ENCODE measurements at regions of chr7 and their contacts with region 1.

Region 1: GRCh38 chr7:105531792-105532671 is at the start of gene RINT1:
- DNase-seq: peak; percentile 78 to 94 (median 86)
- ATAC-seq: peak; percentile 88
- H3K4me3 ChIP-seq: peak within 1 kb of the TSS; percentile 82
- H3K4me3 Mint-ChIP-seq: peak within 1 kb of the TSS; percentile 94
- H3K27ac ChIP-seq: peak within 1 kb of the TSS; percentile 85 to 89
- H3K27ac Mint-ChIP-seq: peak within 1 kb of the TSS; percentile 87
- H3K4me1 ChIP-seq: peaks cover 35% of the 10 kb centered on the region
- H3K4me1 Mint-ChIP-seq: peaks cover 44% of the 10 kb centered on the region
- H3K27me3 ChIP-seq: no peaks in the 10 kb centered on the region
- H3K27me3 Mint-ChIP-seq: no peaks in the 10 kb centered on the region
- CTCF ChIP-seq: peak; percentile 71
- total RNA-seq, gene RINT1: 38.0 to 39.5 TPM

Region 2: GRCh38 chr7:104207731-104208420 is 1324.2 kb before region 1 on chr7 and contains the start of gene ORC5:
- CTCF ChIA-PET with region 1: no interaction called
- POLR2A ChIA-PET with region 1: no interaction called
- intact Hi-C with region 1: loop called in 1 of 2 experiments (anchors 5 kb)
- DNase-seq: peak; percentile 53 to 89 (median 66)
- ATAC-seq: peak; percentile 97
- H3K4me3 ChIP-seq: peak within 1 kb of the TSS; percentile 92
- H3K4me3 Mint-ChIP-seq: peak within 1 kb of the TSS; percentile 97
- H3K27ac ChIP-seq: peak within 1 kb of the TSS; percentile 58 to 77
- H3K27ac Mint-ChIP-seq: peak within 1 kb of the TSS; percentile 94
- H3K4me1 ChIP-seq: peaks cover 20% of the 10 kb centered on the region
- H3K4me1 Mint-ChIP-seq: peaks cover 46% of the 10 kb centered on the region
- H3K27me3 ChIP-seq: no peaks in the 10 kb centered on the region
- H3K27me3 Mint-ChIP-seq: peaks cover 17% of the 10 kb centered on the region
- CTCF ChIP-seq: no peak
- total RNA-seq, gene ORC5: 7.7 to 9.3 TPM

Region 3: DNA sequence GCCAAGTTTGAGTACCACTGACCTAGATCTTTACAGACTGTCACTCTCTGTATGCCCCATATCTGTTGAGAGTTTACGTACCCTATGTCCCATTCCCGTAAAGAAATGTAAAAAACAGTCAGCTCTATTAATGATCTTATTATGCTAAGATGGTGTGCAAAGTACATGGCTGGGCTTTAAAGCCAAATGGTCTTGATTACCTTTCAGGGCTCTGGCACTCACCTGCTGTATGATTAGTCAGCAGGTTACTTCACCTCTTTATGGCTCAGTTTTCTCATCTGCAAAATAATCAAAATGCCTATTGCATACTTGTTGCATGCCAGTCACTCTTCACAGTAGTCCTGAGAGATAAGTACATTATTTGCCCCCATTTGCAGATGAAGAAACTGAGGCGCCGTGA is 1149.4 kb before region 1 on chr7:
- CTCF ChIA-PET with region 1: no interaction called
- POLR2A ChIA-PET with region 1: no interaction called
- intact Hi-C with region 1: no loop called
- DNase-seq: no peak
- ATAC-seq: no peak
- H3K4me3 ChIP-seq: no peak overlapping the region
- H3K4me3 Mint-ChIP-seq: no peak overlapping the region
- H3K27ac ChIP-seq: no peak overlapping the region
- H3K27ac Mint-ChIP-seq: no peak overlapping the region
- H3K4me1 ChIP-seq: no peaks in the 10 kb centered on the region
- H3K4me1 Mint-ChIP-seq: no peaks in the 10 kb centered on the region
- H3K27me3 ChIP-seq: no peaks in the 10 kb centered on the region
- H3K27me3 Mint-ChIP-seq: peaks cover 14% of the 10 kb centered on the region
- CTCF ChIP-seq: no peak

Region 4: DNA sequence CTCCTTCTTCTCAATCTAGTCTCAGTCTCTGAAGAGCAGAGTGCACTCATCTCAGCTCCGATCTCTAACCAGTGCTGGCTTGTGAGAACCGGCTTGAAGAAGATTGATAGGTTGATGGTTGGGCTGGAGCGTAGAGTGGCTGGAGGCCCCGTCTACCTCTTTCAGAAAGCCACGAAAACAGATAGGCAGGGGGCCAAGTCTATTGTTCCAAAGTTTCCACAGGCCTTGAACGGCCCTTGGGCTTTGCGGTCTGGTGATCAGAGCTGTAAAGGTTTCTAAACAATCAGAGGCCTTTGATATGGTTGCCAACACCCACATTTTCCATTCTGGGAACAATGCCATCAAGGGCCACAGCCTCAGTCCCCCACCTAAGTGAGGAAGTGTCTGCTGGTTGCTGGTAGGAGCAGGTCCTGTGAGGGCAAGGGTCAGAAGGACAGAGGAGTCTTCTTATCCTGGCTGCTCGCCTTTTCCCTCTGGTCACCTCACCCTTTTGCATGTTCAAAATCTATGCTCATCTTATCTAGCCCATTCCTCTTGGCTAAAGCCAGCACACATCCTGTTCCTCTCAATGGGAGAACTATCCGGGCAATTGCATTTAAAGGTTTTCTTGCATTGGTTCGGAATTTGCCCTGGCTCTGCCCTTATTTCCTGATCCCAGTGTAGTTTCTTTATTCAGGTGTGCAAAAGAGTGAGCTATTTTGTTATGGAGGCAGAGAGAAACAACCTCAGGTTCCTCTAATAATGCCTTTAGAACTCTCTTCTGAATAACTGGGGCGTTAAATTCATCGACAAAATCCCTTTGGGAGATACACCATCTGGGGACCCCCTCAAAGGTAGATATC is 588.3 kb before region 1 on chr7:
- CTCF ChIA-PET with region 1: no interaction called
- POLR2A ChIA-PET with region 1: interaction called, 8 read pairs
- intact Hi-C with region 1: loop called in 1 of 2 experiments (anchors 2 kb)
- DNase-seq: peak; percentile 33 to 87 (median 53)
- ATAC-seq: peak; percentile 34
- H3K4me3 ChIP-seq: peak overlapping the region; percentile 5
- H3K4me3 Mint-ChIP-seq: peak overlapping the region; percentile 91
- H3K27ac ChIP-seq: peak overlapping the region; percentile 97 to 98
- H3K27ac Mint-ChIP-seq: peak overlapping the region; percentile 100
- H3K4me1 ChIP-seq: peaks cover 67% of the 10 kb centered on the region
- H3K4me1 Mint-ChIP-seq: peaks cover 73% of the 10 kb centered on the region
- H3K27me3 ChIP-seq: no peaks in the 10 kb centered on the region
- H3K27me3 Mint-ChIP-seq: no peaks in the 10 kb centered on the region
- CTCF ChIP-seq: no peak

Region 5: GRCh38 chr7:105046414-105046813 is 485.6 kb before region 1 on chr7:
- CTCF ChIA-PET with region 1: no interaction called
- POLR2A ChIA-PET with region 1: no interaction called
- intact Hi-C with region 1: no loop called
- DNase-seq: no peak
- ATAC-seq: no peak
- H3K4me3 ChIP-seq: no peak overlapping the region
- H3K4me3 Mint-ChIP-seq: peak overlapping the region; percentile 20
- H3K27ac ChIP-seq: no peak overlapping the region
- H3K27ac Mint-ChIP-seq: no peak overlapping the region
- H3K4me1 ChIP-seq: peaks cover 20% of the 10 kb centered on the region
- H3K4me1 Mint-ChIP-seq: peaks cover 65% of the 10 kb centered on the region
- H3K27me3 ChIP-seq: no peaks in the 10 kb centered on the region
- H3K27me3 Mint-ChIP-seq: no peaks in the 10 kb centered on the region
- CTCF ChIP-seq: no peak

Region 6: GRCh38 chr7:105734233-105734632 is 202.2 kb after region 1 on chr7:
- CTCF ChIA-PET with region 1: no interaction called
- POLR2A ChIA-PET with region 1: no interaction called
- intact Hi-C with region 1: no loop called
- DNase-seq: no peak
- ATAC-seq: no peak
- H3K4me3 ChIP-seq: no peak overlapping the region
- H3K4me3 Mint-ChIP-seq: no peak overlapping the region
- H3K27ac ChIP-seq: no peak overlapping the region
- H3K27ac Mint-ChIP-seq: no peak overlapping the region
- H3K4me1 ChIP-seq: no peaks in the 10 kb centered on the region
- H3K4me1 Mint-ChIP-seq: no peaks in the 10 kb centered on the region
- H3K27me3 ChIP-seq: no peaks in the 10 kb centered on the region
- H3K27me3 Mint-ChIP-seq: no peaks in the 10 kb centered on the region
- CTCF ChIP-seq: no peak

Region 7: GRCh38 chr7:105975770-105976422 is 443.9 kb after region 1 on chr7:
- CTCF ChIA-PET with region 1: no interaction called
- POLR2A ChIA-PET with region 1: no interaction called
- intact Hi-C with region 1: no loop called
- DNase-seq: no peak
- ATAC-seq: no peak
- H3K4me3 ChIP-seq: no peak overlapping the region
- H3K4me3 Mint-ChIP-seq: no peak overlapping the region
- H3K27ac ChIP-seq: no peak overlapping the region
- H3K27ac Mint-ChIP-seq: no peak overlapping the region
- H3K4me1 ChIP-seq: no peaks in the 10 kb centered on the region
- H3K4me1 Mint-ChIP-seq: no peaks in the 10 kb centered on the region
- H3K27me3 ChIP-seq: no peaks in the 10 kb centered on the region
- H3K27me3 Mint-ChIP-seq: no peaks in the 10 kb centered on the region
- CTCF ChIP-seq: no peak

Region 8: DNA sequence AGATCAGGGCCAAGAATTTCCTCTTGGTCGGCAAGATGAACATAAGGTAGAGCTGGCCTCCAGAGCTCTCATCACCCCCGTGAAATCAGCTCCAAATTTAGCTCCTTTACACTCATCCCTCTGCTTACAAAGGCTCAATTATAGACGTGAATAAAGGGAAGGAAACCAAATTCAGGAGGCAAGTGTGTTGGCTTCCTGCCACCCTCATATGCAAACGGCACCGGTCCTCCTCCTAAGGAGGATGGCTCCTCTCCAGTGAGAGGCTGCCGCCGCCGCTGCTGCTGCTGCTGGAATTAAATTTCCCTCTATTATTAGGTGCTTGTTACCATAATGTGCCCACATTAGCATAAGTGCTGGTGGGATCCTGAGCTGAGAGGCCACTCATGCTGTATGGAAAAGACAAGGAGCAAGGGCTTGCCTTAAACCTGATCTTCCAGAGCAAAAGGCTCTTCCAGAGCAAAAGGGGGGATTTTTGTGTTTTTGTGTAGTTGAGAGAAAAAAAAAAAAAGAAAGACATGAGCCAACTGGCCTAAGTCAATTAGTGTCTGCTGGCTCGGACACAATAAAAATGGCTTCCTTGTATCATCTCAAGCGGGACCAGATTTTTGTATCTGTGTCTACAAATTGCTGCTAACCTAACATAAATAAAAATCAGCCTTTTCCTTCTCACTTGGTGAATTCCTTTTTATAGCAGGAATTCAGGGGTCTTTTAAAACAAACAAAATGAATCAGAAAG is 499.4 kb after region 1 on chr7:
- CTCF ChIA-PET with region 1: no interaction called
- POLR2A ChIA-PET with region 1: no interaction called
- intact Hi-C with region 1: loop called in 1 of 2 experiments (anchors 10 kb)
- DNase-seq: peak in 5 of 14 experiments; percentile 11 to 60 (median 24)
- ATAC-seq: peak; percentile 67
- H3K4me3 ChIP-seq: no peak overlapping the region
- H3K4me3 Mint-ChIP-seq: no peak overlapping the region
- H3K27ac ChIP-seq: no peak overlapping the region
- H3K27ac Mint-ChIP-seq: peak overlapping the region; percentile 28
- H3K4me1 ChIP-seq: peaks cover 8% of the 10 kb centered on the region
- H3K4me1 Mint-ChIP-seq: peaks cover 39% of the 10 kb centered on the region
- H3K27me3 ChIP-seq: no peaks in the 10 kb centered on the region
- H3K27me3 Mint-ChIP-seq: no peaks in the 10 kb centered on the region
- CTCF ChIP-seq: no peak